Activated CD4-positive, alpha-beta T cell treated with anti-CD3 and anti-CD28 coated beads for 36 hours (primary cell): ENCODE measurements at regions of chr2 and their contacts with region 1.

Region 1: DNA sequence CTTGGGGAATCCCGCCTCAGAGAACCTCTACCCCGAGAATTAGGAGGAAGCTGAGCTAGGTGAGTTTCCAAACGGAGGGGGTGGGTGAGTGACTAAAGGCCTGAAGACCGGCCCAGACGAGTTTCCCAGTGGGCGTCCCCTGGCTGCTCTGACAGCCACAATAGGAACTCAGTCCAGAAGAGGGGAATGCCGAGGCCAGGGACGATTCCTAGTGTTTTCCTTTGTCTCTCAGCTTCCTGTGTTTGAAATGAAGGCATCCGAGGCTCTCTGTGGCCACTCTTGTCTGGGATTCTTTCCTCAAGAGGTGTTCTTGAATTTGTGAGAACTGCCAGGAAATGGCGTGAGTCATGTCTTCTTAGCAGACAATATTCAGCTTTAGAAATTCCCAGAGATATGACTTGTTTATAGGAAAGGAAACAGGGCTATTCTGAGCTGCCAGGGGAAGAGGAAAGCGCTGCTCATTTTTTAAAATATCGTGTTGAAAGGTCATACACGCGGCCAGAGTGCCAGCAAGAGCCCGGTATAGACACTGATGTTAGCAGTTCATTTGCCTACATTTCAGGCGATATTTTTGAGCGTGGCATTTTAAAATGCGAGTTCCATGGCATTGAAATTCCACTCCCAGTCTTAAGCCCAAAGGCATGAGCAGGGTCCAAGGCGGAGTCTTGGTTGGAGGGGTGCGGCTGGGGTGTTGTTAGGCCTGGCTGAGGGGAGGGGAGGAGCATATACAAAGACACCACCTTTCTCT is 169.1 kb upstream of the KLF7 start:
- DNase-seq: peak; percentile 69
- ATAC-seq: peak; percentile 20
- H3K4me3 Mint-ChIP-seq: peak overlapping the region; percentile 48
- H3K27ac Mint-ChIP-seq: peak overlapping the region; percentile 94
- H3K4me1 Mint-ChIP-seq: peaks cover 78% of the 10 kb centered on the region
- H3K27me3 Mint-ChIP-seq: no peaks in the 10 kb centered on the region

Region 2: GRCh38 chr2:207121784-207122183 is 213.0 kb before region 1 on chr2:
- CTCF ChIA-PET with region 1: no interaction called
- POLR2A ChIA-PET with region 1: no interaction called
- intact Hi-C with region 1: loop called in 1 of 2 experiments (anchors 5 kb)
- DNase-seq: no peak
- ATAC-seq: no peak
- H3K4me3 Mint-ChIP-seq: no peak overlapping the region
- H3K27ac Mint-ChIP-seq: peak overlapping the region; percentile 26
- H3K4me1 Mint-ChIP-seq: peaks cover 60% of the 10 kb centered on the region
- H3K27me3 Mint-ChIP-seq: no peaks in the 10 kb centered on the region

Region 3: GRCh38 chr2:207202645-207203044 is 132.2 kb before region 1 on chr2:
- CTCF ChIA-PET with region 1: no interaction called
- POLR2A ChIA-PET with region 1: no interaction called
- intact Hi-C with region 1: no loop called
- DNase-seq: peak; percentile 29
- ATAC-seq: no peak
- H3K4me3 Mint-ChIP-seq: no peak overlapping the region
- H3K27ac Mint-ChIP-seq: no peak overlapping the region
- H3K4me1 Mint-ChIP-seq: no peaks in the 10 kb centered on the region
- H3K27me3 Mint-ChIP-seq: no peaks in the 10 kb centered on the region

Region 4: GRCh38 chr2:207238831-207239701 is 95.7 kb before region 1 on chr2:
- CTCF ChIA-PET with region 1: no interaction called
- POLR2A ChIA-PET with region 1: interaction called, 3 read pairs
- intact Hi-C with region 1: loop called (anchors 2 to 5 kb)
- DNase-seq: peak; percentile 70
- ATAC-seq: peak; percentile 28
- H3K4me3 Mint-ChIP-seq: no peak overlapping the region
- H3K27ac Mint-ChIP-seq: peak overlapping the region; percentile 80
- H3K4me1 Mint-ChIP-seq: peaks cover 19% of the 10 kb centered on the region
- H3K27me3 Mint-ChIP-seq: no peaks in the 10 kb centered on the region

Region 5: GRCh38 chr2:207288628-207289027 is 46.2 kb before region 1 on chr2:
- CTCF ChIA-PET with region 1: interaction called, 3 read pairs
- POLR2A ChIA-PET with region 1: interaction called, 3 read pairs
- intact Hi-C with region 1: loop called (anchors 1 to 5 kb)
- DNase-seq: peak; percentile 63
- ATAC-seq: peak; percentile 40
- H3K4me3 Mint-ChIP-seq: no peak overlapping the region
- H3K27ac Mint-ChIP-seq: no peak overlapping the region
- H3K4me1 Mint-ChIP-seq: peaks cover 75% of the 10 kb centered on the region
- H3K27me3 Mint-ChIP-seq: peaks cover 2% of the 10 kb centered on the region

Region 6: DNA sequence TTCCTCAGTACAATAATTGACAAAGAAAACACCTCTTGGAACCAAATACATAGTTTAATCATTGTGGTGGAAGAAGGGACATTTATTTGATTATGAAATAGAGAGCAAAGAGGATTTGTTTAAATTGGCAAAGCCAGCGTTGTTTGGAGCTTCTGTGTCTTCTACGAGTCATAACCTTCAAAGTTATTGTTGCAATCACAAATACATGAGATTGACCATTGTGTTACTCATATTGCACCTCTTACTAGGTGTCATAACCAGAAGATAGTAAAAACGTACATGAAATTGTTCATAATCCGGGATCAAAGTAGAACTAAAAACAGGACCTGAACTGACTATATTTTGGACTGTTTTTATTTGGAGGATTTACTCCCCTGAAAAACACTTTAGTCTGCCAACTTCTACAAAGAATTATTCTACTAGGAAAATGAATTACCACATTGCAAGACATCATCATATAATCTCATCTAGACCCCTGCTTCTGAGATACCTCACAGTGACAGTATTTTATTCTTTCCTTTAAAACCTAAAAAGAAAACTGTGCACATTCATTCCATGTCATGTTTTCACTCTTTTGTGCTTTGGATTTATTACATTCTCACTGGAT is 17.3 kb before region 1 on chr2:
- CTCF ChIA-PET with region 1: interaction called, 3 read pairs
- POLR2A ChIA-PET with region 1: no interaction called
- intact Hi-C with region 1: loop called in 1 of 2 experiments (anchors 1 kb)
- DNase-seq: no peak
- ATAC-seq: peak; percentile 79
- H3K4me3 Mint-ChIP-seq: no peak overlapping the region
- H3K27ac Mint-ChIP-seq: peak overlapping the region; percentile 58
- H3K4me1 Mint-ChIP-seq: peaks cover 24% of the 10 kb centered on the region
- H3K27me3 Mint-ChIP-seq: peaks cover 4% of the 10 kb centered on the region